ENCODE measurements at regions of chr21 and their contacts with region 1.

Region 1: DNA sequence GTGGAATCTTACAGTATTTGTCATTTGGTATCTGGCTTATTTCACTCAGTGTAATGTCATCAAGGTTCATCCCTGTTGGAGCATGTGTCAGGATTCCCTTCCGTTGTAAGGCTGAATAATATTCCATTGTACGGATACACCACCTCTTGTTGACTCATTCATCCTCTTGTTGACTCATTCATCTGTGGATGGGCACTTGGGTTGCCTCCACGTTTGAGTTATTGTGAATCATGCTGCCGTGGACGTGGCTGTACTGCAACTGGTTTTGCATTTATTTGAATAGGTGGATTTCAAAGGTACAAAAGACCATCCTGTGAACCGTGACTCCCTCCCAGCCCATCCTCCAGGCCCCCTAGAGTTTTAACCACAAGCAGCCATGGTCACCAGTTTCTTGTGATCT is 11.9 kb upstream of the TCP10L start:
- H3K4me3 ChIP-seq: no peak overlapping the region
- H3K27ac ChIP-seq: no peak overlapping the region
- H3K4me1 ChIP-seq: no peaks in the 10 kb centered on the region
- CTCF ChIP-seq: no peak

Region 2: GRCh38 chr21:32386195-32386870 is 210.9 kb before region 1 on chr21:
- CTCF ChIA-PET with region 1: interaction called, 14 read pairs
- POLR2A ChIA-PET with region 1: no interaction called
- H3K4me3 ChIP-seq: no peak overlapping the region
- H3K27ac ChIP-seq: no peak overlapping the region
- H3K4me1 ChIP-seq: peaks cover 4% of the 10 kb centered on the region; the same call in 1 of the 2 replicates
- CTCF ChIP-seq: no peak

Region 3: GRCh38 chr21:32403201-32403777 is 193.9 kb before region 1 on chr21:
- CTCF ChIA-PET with region 1: interaction called, 209 read pairs
- POLR2A ChIA-PET with region 1: interaction called, 10 read pairs
- H3K4me3 ChIP-seq: no peak overlapping the region
- H3K27ac ChIP-seq: no peak overlapping the region
- H3K4me1 ChIP-seq: no peaks in the 10 kb centered on the region
- CTCF ChIP-seq: peak; percentile 70

Region 4: GRCh38 chr21:32569261-32570230 is 27.7 kb before region 1 on chr21:
- CTCF ChIA-PET with region 1: interaction called, 11 read pairs
- POLR2A ChIA-PET with region 1: no interaction called
- H3K4me3 ChIP-seq: peak overlapping the region; percentile 53
- H3K27ac ChIP-seq: peak overlapping the region; percentile 65
- H3K4me1 ChIP-seq: no peaks in the 10 kb centered on the region
- CTCF ChIP-seq: peak; percentile 81

Region 5: DNA sequence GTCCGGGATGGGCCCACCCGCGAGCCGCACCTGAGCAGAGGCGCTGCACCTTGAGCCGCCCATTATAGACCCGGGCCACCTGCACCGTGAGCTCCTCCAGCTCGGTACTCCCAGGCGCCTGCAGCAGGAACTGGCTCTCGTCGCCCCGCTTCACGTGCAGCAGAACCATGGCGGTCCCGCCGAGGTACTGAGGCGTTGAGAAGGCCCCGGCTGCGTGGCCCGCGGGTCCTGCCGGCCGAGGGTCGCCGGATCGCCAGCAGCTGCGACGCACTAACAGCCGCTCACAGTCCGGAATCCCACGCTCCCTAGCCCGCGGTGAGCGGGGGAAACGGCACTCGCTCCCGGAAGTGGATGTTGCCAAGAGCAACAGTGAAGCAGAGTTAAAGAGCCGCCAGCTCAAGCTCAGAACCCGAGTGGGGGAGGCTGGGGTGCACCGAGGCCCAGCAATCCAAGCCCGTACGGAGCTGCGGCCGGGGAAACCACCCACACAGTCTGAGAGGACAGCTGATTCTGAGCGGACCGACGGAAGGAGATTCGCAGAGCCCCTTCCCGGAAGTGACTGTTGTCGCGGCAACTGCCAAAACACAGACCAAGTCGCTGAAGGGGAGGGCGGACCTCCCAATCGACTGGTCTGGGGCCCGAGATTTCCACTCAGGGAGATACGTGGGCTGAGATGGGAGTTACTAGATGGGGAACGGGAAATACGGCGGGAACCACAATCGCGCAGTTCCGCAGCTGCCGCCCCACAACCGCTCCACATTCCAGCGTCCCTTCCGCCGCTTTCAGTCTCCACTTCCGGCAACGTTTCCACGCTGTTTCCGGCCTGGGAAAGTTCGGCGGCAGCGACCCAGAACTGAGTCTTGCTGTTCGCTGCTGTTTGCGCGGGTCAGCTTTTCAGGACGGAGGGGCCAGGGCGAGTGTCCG is 15.1 kb after region 1 on chr21 and contains the start of gene CFAP298:
- CTCF ChIA-PET with region 1: interaction called, 45 read pairs
- POLR2A ChIA-PET with region 1: interaction called, 23 read pairs
- H3K4me3 ChIP-seq: peak within 1 kb of the TSS; percentile 84
- H3K27ac ChIP-seq: peak within 1 kb of the TSS; percentile 69
- H3K4me1 ChIP-seq: no peaks in the 10 kb centered on the region
- CTCF ChIP-seq: 0 out of 2 replicates have a peak, but pooled peaks have one; percentile 17

Measured in HEK293 (cell line).